ENCODE measurements at regions of chr18 and their contacts with region 1.

Region 1: DNA sequence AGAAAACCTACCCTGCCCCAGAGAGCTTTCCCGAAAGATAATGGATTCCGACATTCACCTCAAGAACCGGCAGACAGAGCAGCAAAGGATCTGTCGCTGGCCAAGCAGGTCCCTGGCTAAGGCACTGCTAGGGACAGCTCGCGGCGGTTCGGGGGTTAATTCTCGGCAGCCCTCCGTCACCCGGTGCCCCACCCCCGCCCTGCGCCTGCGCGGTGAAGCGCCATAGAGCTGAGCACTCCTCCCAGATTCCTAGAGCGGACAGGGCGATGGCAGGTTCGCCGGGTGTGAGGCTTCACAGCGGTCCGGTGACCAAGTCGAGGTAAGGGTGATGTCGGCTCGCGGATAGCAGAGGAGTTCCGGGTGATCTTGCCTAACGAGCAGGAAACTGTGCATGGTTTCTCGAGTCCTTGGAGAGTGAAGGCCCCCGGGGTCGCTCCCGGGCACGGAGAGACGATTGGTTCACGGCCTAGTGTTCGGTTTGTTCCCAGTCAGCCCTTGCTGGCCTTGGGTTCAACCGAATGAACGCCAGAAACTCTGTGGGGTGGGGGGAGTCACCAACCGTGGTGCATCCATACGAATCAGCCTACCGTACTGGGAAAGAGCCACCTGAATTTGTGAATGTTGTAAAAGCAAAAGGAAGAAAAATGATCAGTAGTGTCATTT is at the start of gene ZSCAN30:
- DNase-seq: peak; percentile 90 to 96 (median 94)
- ATAC-seq: peak; percentile 99
- H3K4me3 ChIP-seq: peak within 1 kb of the TSS; percentile 90
- H3K4me3 Mint-ChIP-seq: peak within 1 kb of the TSS; percentile 97 to 99 (median 98)
- H3K27ac ChIP-seq: peak within 1 kb of the TSS; percentile 86
- H3K27ac Mint-ChIP-seq: peak within 1 kb of the TSS; percentile 94 to 100 (median 98)
- H3K4me1 ChIP-seq: peaks cover 16 to 18% of the 10 kb centered on the region in 2 donors
- H3K4me1 Mint-ChIP-seq: peaks cover 29 to 86% (median 75%) of the 10 kb centered on the region in 7 donors
- H3K27me3 ChIP-seq: no peaks in the 10 kb centered on the region
- H3K27me3 Mint-ChIP-seq: no peaks in the 10 kb centered on the region
- total RNA-seq, gene ZSCAN30: 14.0 to 23.2 (median 20.8) TPM

Region 2: GRCh38 chr18:35267161-35267651 is 23.0 kb before region 1 on chr18:
- CTCF ChIA-PET with region 1: no interaction called
- POLR2A ChIA-PET with region 1: interaction called, 32 read pairs
- intact Hi-C with region 1: loop called (anchors 1 kb)
- DNase-seq: peak; percentile 37 to 62 (median 54)
- ATAC-seq: peak; percentile 90
- H3K4me3 ChIP-seq: peak overlapping the region; percentile 78
- H3K4me3 Mint-ChIP-seq: peak overlapping the region; percentile 85 to 99 (median 97)
- H3K27ac ChIP-seq: peak overlapping the region; percentile 74
- H3K27ac Mint-ChIP-seq: peak overlapping the region; percentile 83 to 98 (median 97)
- H3K4me1 ChIP-seq: peaks cover 0 to 7% of the 10 kb centered on the region in 2 donors
- H3K4me1 Mint-ChIP-seq: peaks cover 13 to 35% (median 26%) of the 10 kb centered on the region in 7 donors
- H3K27me3 ChIP-seq: no peaks in the 10 kb centered on the region
- H3K27me3 Mint-ChIP-seq: no peaks in the 10 kb centered on the region

Region 3: GRCh38 chr18:35376742-35377695 is 86.8 kb after region 1 on chr18 and contains the start of gene ZNF396:
- CTCF ChIA-PET with region 1: no interaction called
- POLR2A ChIA-PET with region 1: interaction called, 3 read pairs
- intact Hi-C with region 1: loop called (anchors 1 kb)
- DNase-seq: peak; percentile 51 to 72 (median 58)
- ATAC-seq: peak; percentile 81
- H3K4me3 ChIP-seq: peak within 1 kb of the TSS; percentile 75
- H3K4me3 Mint-ChIP-seq: peak within 1 kb of the TSS; percentile 80 to 92 (median 88)
- H3K27ac ChIP-seq: peak within 1 kb of the TSS; percentile 55
- H3K27ac Mint-ChIP-seq: peak within 1 kb of the TSS; percentile 44 to 90 (median 74)
- H3K4me1 ChIP-seq: no peaks in the 10 kb centered on the region
- H3K4me1 Mint-ChIP-seq: peaks cover 3 to 12% (median 10%) of the 10 kb centered on the region in 7 donors
- H3K27me3 ChIP-seq: no peaks in the 10 kb centered on the region
- H3K27me3 Mint-ChIP-seq: peaks cover 0 to 29% (median 0%) of the 10 kb centered on the region in 5 donors
- total RNA-seq, gene ZNF396: 0.11 to 8.2 (median 0.54) TPM

Region 4: GRCh38 chr18:35580701-35581539 is 290.7 kb after region 1 on chr18:
- CTCF ChIA-PET with region 1: no interaction called
- POLR2A ChIA-PET with region 1: interaction called, 4 read pairs
- intact Hi-C with region 1: loop called in 1 of 2 experiments (anchors 5 kb)
- DNase-seq: peak; percentile 54 to 70 (median 63)
- ATAC-seq: peak; percentile 84
- H3K4me3 ChIP-seq: peak overlapping the region; percentile 61
- H3K4me3 Mint-ChIP-seq: peak overlapping the region; percentile 60 to 80 (median 72)
- H3K27ac ChIP-seq: peak overlapping the region; percentile 77
- H3K27ac Mint-ChIP-seq: peak overlapping the region in 5 of 9 donors; percentile 37 to 80 (median 63)
- H3K4me1 ChIP-seq: peaks cover 11% of the 10 kb centered on the region in 2 donors
- H3K4me1 Mint-ChIP-seq: peaks cover 13 to 39% (median 28%) of the 10 kb centered on the region in 7 donors
- H3K27me3 ChIP-seq: no peaks in the 10 kb centered on the region
- H3K27me3 Mint-ChIP-seq: peaks cover 0 to 18% (median 7%) of the 10 kb centered on the region in 5 donors

Region 5: DNA sequence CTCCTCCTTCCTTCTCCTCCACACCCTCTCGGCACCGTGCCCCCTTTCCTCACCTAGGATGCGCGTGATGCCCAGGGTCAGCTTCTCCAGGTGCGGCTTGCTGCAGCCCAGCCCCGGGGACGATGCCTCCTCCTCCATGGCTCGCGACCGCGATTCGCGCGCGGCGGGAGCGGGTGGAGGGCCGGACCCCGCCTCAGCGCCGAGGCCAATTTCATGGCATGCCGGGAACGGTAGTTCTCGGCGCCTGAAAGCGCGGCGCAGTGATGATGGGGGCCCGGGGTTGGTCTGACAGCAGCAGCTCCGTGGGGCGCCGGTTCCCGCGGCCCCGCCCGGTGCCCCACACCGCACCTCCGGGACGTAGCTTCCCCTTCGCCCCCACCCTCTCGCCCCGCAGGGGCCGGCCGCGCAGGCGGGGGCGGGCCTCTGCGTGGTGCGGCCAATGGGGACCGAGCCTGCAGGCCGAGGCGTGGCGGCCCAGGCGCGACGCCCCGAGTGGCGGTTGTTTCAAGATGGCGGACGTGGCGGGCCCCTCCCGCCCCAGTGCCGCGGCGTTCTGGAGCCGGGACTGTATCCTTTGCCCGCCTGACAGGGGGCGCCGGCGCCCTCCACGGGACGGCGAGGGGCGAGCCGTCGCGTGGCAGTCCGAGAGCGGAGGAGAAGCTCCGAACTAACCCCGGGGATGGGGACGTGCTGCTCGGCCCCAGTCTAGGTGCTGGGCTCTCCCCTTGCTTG is 1538.6 kb after region 1 on chr18 and contains the starts of genes KIAA1328 and TPGS2:
- CTCF ChIA-PET with region 1: no interaction called
- POLR2A ChIA-PET with region 1: no interaction called
- intact Hi-C with region 1: loop called in 1 of 2 experiments (anchors 2 kb)
- DNase-seq: peak; percentile 77 to 90 (median 87)
- ATAC-seq: peak; percentile 96
- H3K4me3 ChIP-seq: peak within 1 kb of the TSS; percentile 79
- H3K4me3 Mint-ChIP-seq: peak within 1 kb of the TSS; percentile 73 to 98 (median 92)
- H3K27ac ChIP-seq: peak within 1 kb of the TSS; percentile 75
- H3K27ac Mint-ChIP-seq: peak within 1 kb of the TSS; percentile 57 to 98 (median 90)
- H3K4me1 ChIP-seq: peaks cover 15 to 18% of the 10 kb centered on the region in 2 donors
- H3K4me1 Mint-ChIP-seq: peaks cover 27 to 60% (median 47%) of the 10 kb centered on the region in 7 donors
- H3K27me3 ChIP-seq: no peaks in the 10 kb centered on the region
- H3K27me3 Mint-ChIP-seq: no peaks in the 10 kb centered on the region
- total RNA-seq, gene KIAA1328: 8.1 to 17.6 (median 16.0) TPM
- total RNA-seq, gene TPGS2: 16.9 to 92.8 (median 53.5) TPM